ENCODE measurements at regions of chr1 and their contacts with region 1.

Region 1: DNA sequence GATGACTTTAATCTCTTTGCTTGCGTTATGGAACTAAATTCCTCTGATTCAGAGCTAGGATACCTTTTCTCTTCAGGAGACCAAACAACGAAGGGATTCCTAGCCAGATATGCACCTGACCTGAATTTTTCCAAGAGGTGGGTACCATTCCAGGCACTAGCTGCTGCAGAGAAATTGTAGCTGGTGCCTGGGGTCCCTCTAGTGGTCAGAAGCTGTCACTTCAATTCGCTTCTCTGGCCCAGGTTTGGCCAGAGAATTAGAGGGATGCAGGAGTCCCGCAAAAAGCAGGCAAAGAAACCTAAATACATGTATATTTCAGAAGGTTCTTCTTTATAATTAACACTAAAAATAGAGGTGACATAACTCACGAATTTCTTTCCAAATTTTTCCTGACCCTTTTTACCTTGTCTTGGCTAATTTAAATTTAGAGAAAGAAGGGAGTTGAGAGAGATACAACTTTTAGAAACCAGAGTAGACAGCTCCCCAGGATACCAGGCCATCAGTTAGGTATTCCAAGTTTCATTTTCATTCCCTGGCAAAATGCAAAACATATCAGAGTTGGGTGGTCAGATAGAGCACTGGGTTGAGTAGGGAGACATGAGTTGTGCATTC is 9.6 kb downstream of the ACKR1 start:
- DNase-seq: peak; percentile 75
- H3K4me3 Mint-ChIP-seq: no peak overlapping the region
- H3K27ac Mint-ChIP-seq: peak overlapping the region; percentile 30
- H3K4me1 Mint-ChIP-seq: peaks cover 42% of the 10 kb centered on the region
- H3K27me3 Mint-ChIP-seq: no peaks in the 10 kb centered on the region
- CTCF ChIP-seq: peak; percentile 92

Region 2: GRCh38 chr1:158520955-158521665 is 693.1 kb before region 1 on chr1:
- CTCF ChIA-PET with region 1: no interaction called
- POLR2A ChIA-PET with region 1: no interaction called
- intact Hi-C with region 1: no loop called
- DNase-seq: no peak
- H3K4me3 Mint-ChIP-seq: no peak overlapping the region
- H3K27ac Mint-ChIP-seq: no peak overlapping the region
- H3K4me1 Mint-ChIP-seq: no peaks in the 10 kb centered on the region
- H3K27me3 Mint-ChIP-seq: peaks cover 100% of the 10 kb centered on the region
- CTCF ChIP-seq: no peak

Region 3: DNA sequence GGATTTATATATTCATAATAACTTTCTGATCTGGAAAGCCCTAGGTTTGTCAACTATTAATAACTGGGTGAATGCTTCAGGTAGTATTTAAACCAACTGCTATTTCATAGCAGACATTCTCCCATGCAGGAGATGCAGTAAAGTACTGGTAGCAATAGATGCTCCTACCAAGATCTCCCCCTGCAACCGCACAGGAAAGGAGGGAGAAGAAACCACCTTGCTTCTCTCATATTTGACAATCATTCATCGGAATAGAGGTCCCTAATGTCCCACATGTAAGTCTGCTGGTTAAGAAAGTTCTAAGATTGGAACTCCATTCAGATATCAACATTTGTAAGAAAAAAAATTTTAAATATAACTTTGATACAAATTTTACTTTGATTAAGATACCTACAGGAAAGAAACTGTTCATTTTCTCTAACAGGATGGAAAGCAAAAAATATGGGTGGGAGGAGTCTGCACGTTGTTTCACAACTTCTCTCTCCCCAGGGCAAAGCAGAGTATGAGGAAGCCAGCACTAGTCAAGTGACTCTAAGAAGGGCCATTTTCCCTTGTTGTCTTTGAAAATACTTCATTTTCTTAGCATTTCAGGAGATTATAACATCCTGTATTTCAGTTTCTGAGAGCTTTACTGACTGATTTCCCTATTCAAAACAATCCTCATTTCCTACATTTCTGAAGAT is 283.1 kb before region 1 on chr1 and contains the start of gene PYHIN1:
- CTCF ChIA-PET with region 1: no interaction called
- POLR2A ChIA-PET with region 1: no interaction called
- intact Hi-C with region 1: no loop called
- DNase-seq: no peak
- H3K4me3 Mint-ChIP-seq: peak within 1 kb of the TSS; percentile 6
- H3K27ac Mint-ChIP-seq: no peak within 1 kb of the TSS
- H3K4me1 Mint-ChIP-seq: peaks cover 10% of the 10 kb centered on the region
- H3K27me3 Mint-ChIP-seq: peaks cover 25% of the 10 kb centered on the region
- CTCF ChIP-seq: no peak
- total RNA-seq, gene PYHIN1: 0.44 TPM in 1 of 2 replicates, not detected in the other

Region 4: GRCh38 chr1:158998781-158999161 is 215.5 kb before region 1 on chr1:
- CTCF ChIA-PET with region 1: no interaction called
- POLR2A ChIA-PET with region 1: no interaction called
- intact Hi-C with region 1: no loop called
- DNase-seq: peak; percentile 81
- H3K4me3 Mint-ChIP-seq: peak overlapping the region; percentile 65
- H3K27ac Mint-ChIP-seq: peak overlapping the region; percentile 63
- H3K4me1 Mint-ChIP-seq: peaks cover 22% of the 10 kb centered on the region
- H3K27me3 Mint-ChIP-seq: no peaks in the 10 kb centered on the region
- CTCF ChIP-seq: peak; percentile 95

Region 5: DNA sequence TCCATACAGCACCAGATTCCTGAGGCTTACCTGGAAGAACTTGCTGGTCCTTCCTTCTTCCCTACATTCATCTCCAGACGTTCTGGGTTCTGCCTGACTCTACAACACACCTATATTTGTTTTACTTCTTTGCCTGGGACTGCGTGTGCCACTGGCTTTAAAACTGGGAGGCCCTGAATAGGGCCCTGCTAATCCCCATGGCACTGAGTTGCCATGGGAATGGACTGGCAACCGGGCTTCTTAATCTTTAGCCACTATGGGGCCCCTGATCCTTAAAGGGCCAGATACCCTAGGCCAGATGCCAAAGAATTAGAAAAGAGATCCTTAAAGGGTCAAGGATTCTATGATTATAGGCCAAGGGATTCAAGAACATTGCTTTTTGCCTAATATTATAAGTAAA is 67.3 kb before region 1 on chr1:
- CTCF ChIA-PET with region 1: interaction called, 358 read pairs
- POLR2A ChIA-PET with region 1: no interaction called
- intact Hi-C with region 1: no loop called
- DNase-seq: no peak
- H3K4me3 Mint-ChIP-seq: no peak overlapping the region
- H3K27ac Mint-ChIP-seq: no peak overlapping the region
- H3K4me1 Mint-ChIP-seq: peaks cover 1% of the 10 kb centered on the region
- H3K27me3 Mint-ChIP-seq: peaks cover 4% of the 10 kb centered on the region
- CTCF ChIP-seq: no peak

Region 6: GRCh38 chr1:159197561-159198557 is 16.4 kb before region 1 on chr1:
- CTCF ChIA-PET with region 1: interaction called, 315 read pairs
- POLR2A ChIA-PET with region 1: interaction called, 10 read pairs
- intact Hi-C with region 1: no loop called
- DNase-seq: peak; percentile 88
- H3K4me3 Mint-ChIP-seq: no peak overlapping the region
- H3K27ac Mint-ChIP-seq: no peak overlapping the region
- H3K4me1 Mint-ChIP-seq: peaks cover 32% of the 10 kb centered on the region
- H3K27me3 Mint-ChIP-seq: no peaks in the 10 kb centered on the region
- CTCF ChIP-seq: peak; percentile 95

Region 7: DNA sequence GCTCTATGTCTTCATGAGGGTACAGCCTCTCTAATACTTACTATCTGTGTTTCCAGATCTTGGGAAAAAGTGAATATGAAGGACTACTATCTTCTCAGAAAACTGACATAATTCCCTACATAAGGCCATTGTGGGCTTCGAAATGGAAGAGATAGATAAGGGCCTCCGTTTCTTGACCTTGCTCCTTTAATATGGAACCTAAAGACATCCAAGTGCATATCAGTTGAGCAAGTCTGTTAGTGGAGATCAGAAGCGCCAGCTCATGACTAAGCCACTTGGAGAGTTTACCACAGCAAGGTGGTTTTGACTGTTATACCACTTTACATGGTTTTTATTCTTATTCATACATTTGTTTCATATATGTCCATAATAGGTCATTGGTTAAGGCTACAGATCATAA is 52.6 kb after region 1 on chr1:
- CTCF ChIA-PET with region 1: interaction called, 24 read pairs
- POLR2A ChIA-PET with region 1: interaction called, 3 read pairs
- intact Hi-C with region 1: no loop called
- DNase-seq: no peak
- H3K4me3 Mint-ChIP-seq: no peak overlapping the region
- H3K27ac Mint-ChIP-seq: peak overlapping the region; percentile 32
- H3K4me1 Mint-ChIP-seq: peaks cover 32% of the 10 kb centered on the region
- H3K27me3 Mint-ChIP-seq: no peaks in the 10 kb centered on the region
- CTCF ChIP-seq: no peak

Region 8: GRCh38 chr1:159598196-159598595 is 383.9 kb after region 1 on chr1:
- CTCF ChIA-PET with region 1: interaction called, 4 read pairs
- POLR2A ChIA-PET with region 1: no interaction called
- intact Hi-C with region 1: loop called (anchors 5 kb)
- DNase-seq: peak; percentile 91
- H3K4me3 Mint-ChIP-seq: peak overlapping the region; percentile 2
- H3K27ac Mint-ChIP-seq: peak overlapping the region; percentile 75
- H3K4me1 Mint-ChIP-seq: peaks cover 66% of the 10 kb centered on the region
- H3K27me3 Mint-ChIP-seq: no peaks in the 10 kb centered on the region
- CTCF ChIP-seq: no peak

Region 9: DNA sequence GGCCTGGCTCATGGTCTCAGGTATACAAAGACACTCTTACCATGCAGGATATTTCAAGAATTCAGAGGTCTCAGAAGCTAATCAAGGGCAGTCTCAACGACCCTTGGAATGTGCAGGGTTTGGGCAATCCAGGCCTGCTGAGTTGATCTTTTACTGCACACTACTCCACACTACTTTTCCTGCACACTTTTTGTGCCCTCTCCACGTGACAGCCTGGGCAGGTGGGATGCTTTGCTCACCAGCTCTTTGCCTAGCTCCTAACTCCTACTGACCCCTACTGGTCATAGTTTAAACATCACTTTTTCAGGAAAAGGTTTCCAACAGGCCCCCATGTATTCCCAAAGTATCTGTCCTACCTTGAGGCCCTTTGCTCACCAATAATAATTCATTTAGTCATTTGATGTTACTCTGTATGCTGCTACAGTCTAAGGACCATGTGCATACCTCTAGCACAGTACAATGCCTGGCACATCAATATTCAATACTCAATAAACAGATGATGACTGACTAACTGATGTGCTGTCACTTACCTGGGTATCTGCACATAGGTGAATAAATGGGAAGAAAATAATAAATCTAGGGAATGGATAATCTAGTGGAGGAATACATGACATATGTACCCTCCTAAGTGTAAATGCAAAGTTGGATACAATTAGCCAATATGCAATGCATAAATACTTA is 576.1 kb after region 1 on chr1:
- CTCF ChIA-PET with region 1: interaction called, 11 read pairs
- POLR2A ChIA-PET with region 1: no interaction called
- intact Hi-C with region 1: loop called (anchors 5 kb)
- DNase-seq: peak; percentile 66
- H3K4me3 Mint-ChIP-seq: no peak overlapping the region
- H3K27ac Mint-ChIP-seq: peak overlapping the region; percentile 29
- H3K4me1 Mint-ChIP-seq: peaks cover 32% of the 10 kb centered on the region
- H3K27me3 Mint-ChIP-seq: no peaks in the 10 kb centered on the region
- CTCF ChIP-seq: peak; percentile 85

Region 10: GRCh38 chr1:159891275-159892157 is 677.3 kb after region 1 on chr1:
- CTCF ChIA-PET with region 1: interaction called, 147 read pairs
- POLR2A ChIA-PET with region 1: interaction called, 4 read pairs
- intact Hi-C with region 1: loop called (anchors 1 kb)
- DNase-seq: peak; percentile 96
- H3K4me3 Mint-ChIP-seq: no peak overlapping the region
- H3K27ac Mint-ChIP-seq: peak overlapping the region; percentile 28
- H3K4me1 Mint-ChIP-seq: peaks cover 19% of the 10 kb centered on the region
- H3K27me3 Mint-ChIP-seq: no peaks in the 10 kb centered on the region
- CTCF ChIP-seq: peak; percentile 100

Measured in MCF 10A (cell line).